ENCODE measurements at regions of chr2 and their contacts with region 1.

Region 1: GRCh38 chr2:128062571-128062970 is 28.4 kb upstream of the UGGT1 start:
- DNase-seq: no peak
- ATAC-seq: no peak
- H3K4me3 ChIP-seq: no peak overlapping the region
- H3K27ac ChIP-seq: no peak overlapping the region
- H3K4me1 ChIP-seq: no peaks in the 10 kb centered on the region
- H3K27me3 ChIP-seq: no peaks in the 10 kb centered on the region
- CTCF ChIP-seq: no peak

Region 2: GRCh38 chr2:128145651-128146050 is 83.1 kb after region 1 on chr2:
- CTCF ChIA-PET with region 1: interaction called, 11 read pairs
- POLR2A ChIA-PET with region 1: no interaction called
- in situ Hi-C with region 1: no loop called
- intact Hi-C with region 1: no loop called
- DNase-seq: no peak
- ATAC-seq: no peak
- H3K4me3 ChIP-seq: no peak overlapping the region
- H3K27ac ChIP-seq: no peak overlapping the region
- H3K4me1 ChIP-seq: no peaks in the 10 kb centered on the region
- H3K27me3 ChIP-seq: no peaks in the 10 kb centered on the region
- CTCF ChIP-seq: no peak

Measured in Panc1 (cell line).